Transverse colon (tissue), 4 donors: ENCODE measurements at regions of chr2 and their contacts with region 1.

Region 1: GRCh38 chr2:33521791-33522281 is 45.4 kb downstream of the RASGRP3 start:
- DNase-seq: no peak
- H3K4me3 ChIP-seq: no peak overlapping the region
- H3K27ac ChIP-seq: no peak overlapping the region
- H3K4me1 ChIP-seq: peaks cover 0 to 18% (median 0%) of the 10 kb centered on the region in 4 donors
- H3K27me3 ChIP-seq: no peaks in the 10 kb centered on the region
- CTCF ChIP-seq: no peak
- EP300 ChIP-seq: no peak
- POLR2A ChIP-seq: no peak

Region 2: GRCh38 chr2:33541243-33541642 is 19.4 kb after region 1 on chr2:
- in situ Hi-C with region 1: no loop called
- intact Hi-C with region 1: loop called (anchors 1 kb)
- DNase-seq: no peak
- H3K4me3 ChIP-seq: no peak overlapping the region
- H3K27ac ChIP-seq: no peak overlapping the region
- H3K4me1 ChIP-seq: no peaks in the 10 kb centered on the region
- H3K27me3 ChIP-seq: no peaks in the 10 kb centered on the region
- CTCF ChIP-seq: no peak
- EP300 ChIP-seq: no peak
- POLR2A ChIP-seq: no peak